ENCODE measurements at regions of chr12 and their contacts with region 1.

Region 1: DNA sequence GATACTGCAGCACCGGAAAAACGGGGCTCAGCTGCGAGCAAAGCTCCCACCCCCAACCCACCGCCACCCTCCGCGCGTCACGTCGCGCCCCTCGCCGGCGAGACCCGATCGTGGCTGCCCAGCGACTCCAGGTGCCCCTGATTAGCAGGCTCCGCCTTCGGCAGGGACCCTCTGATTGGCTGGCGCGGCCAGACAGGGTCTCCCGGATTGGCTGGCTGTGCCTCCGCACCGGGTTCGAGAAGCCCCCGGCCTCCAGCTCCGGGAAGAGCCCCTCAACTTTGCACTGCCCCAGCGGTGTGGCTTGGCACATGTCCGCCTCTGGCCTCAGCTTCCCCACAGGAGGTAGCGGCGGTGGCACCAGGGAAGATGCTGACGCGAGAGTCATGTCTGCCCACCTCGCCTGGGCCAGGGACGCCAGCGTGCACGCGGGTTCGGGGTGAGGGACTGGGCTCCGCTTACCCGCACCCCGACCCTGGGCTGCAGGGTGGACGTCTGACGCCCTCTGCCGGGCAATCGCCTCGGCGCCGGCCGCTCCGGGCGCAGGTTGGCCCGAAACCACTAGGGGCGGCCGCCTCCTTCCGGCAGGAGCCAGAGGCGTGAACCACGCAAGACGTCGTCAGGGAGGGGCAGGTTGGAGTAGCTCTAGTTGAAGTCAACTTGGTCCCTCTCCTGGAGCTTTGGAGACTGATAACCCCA is 498 bp upstream of the RHOF start:
- DNase-seq: no peak
- H3K4me3 ChIP-seq: peak overlapping the region; percentile 47
- H3K27me3 ChIP-seq: no peaks in the 10 kb centered on the region
- CTCF ChIP-seq: peak; percentile 100

Region 2: GRCh38 chr12:121697098-121697698 is 96.8 kb before region 1 on chr12:
- CTCF ChIA-PET with region 1: interaction called, 119 read pairs
- POLR2A ChIA-PET with region 1: no interaction called
- DNase-seq: no peak
- H3K4me3 ChIP-seq: no peak overlapping the region
- H3K27me3 ChIP-seq: no peaks in the 10 kb centered on the region
- CTCF ChIP-seq: peak; percentile 27; the same call in 1 of the 2 replicates

Region 3: DNA sequence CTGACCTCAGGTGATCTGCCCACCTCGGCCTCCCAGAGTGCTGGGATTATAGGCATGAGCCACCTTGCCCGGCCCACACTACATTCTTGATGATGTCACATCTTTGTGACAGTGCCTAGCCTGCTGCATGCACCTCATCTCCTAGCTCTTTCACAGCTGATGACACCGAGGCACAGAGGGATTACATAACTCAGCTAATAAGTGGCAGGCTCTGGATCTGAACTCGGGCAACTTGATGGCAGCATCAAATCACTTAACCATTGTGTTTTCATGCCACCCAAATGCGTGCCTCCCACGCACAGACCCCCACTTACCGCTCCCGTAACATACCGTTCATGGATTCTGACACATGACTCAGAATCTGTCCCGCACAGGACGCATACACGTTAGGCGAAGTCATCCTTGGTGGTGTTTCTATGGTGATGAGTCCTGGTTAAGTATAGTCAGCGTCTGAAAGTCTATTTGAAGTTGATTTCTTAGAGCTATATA is 74.0 kb before region 1 on chr12:
- CTCF ChIA-PET with region 1: interaction called, 24 read pairs
- POLR2A ChIA-PET with region 1: no interaction called
- DNase-seq: peak; percentile 82
- H3K4me3 ChIP-seq: no peak overlapping the region
- H3K27me3 ChIP-seq: no peaks in the 10 kb centered on the region
- CTCF ChIP-seq: no peak

Region 4: GRCh38 chr12:121773011-121773777 is 20.8 kb before region 1 on chr12:
- CTCF ChIA-PET with region 1: interaction called, 322 read pairs
- POLR2A ChIA-PET with region 1: no interaction called
- DNase-seq: no peak
- H3K4me3 ChIP-seq: no peak overlapping the region
- H3K27me3 ChIP-seq: no peaks in the 10 kb centered on the region
- CTCF ChIP-seq: peak; percentile 90

Region 5: DNA sequence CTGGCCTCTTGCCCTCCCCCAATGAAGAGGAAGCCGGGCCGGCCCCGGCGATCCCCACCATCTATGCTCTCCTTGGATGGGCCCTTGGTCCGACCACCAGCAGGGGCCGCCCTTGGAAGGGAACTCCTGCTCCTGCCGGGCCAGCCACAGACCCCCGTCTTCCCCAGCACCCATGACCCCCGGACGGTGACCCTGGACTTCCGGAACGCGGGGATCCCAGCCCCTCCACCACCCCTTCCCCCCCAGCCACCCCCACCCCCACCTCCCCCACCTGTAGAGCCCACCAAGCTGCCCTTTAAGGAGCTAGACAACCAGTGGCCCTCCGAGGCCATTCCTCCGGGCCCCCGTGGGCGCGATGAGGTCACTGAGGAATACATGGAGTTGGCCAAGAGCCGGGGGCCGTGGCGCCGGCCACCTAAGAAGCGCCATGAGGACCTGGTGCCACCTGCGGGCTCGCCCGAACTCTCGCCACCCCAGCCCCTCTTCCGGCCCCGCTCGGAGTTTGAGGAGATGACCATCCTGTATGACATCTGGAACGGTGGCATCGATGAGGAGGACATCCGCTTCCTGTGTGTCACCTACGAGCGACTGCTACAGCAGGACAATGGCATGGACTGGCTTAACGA is 29.2 kb after region 1 on chr12:
- CTCF ChIA-PET with region 1: interaction called, 23 read pairs
- POLR2A ChIA-PET with region 1: no interaction called
- DNase-seq: no peak
- H3K4me3 ChIP-seq: no peak overlapping the region
- H3K27me3 ChIP-seq: no peaks in the 10 kb centered on the region
- CTCF ChIP-seq: no peak

Region 6: DNA sequence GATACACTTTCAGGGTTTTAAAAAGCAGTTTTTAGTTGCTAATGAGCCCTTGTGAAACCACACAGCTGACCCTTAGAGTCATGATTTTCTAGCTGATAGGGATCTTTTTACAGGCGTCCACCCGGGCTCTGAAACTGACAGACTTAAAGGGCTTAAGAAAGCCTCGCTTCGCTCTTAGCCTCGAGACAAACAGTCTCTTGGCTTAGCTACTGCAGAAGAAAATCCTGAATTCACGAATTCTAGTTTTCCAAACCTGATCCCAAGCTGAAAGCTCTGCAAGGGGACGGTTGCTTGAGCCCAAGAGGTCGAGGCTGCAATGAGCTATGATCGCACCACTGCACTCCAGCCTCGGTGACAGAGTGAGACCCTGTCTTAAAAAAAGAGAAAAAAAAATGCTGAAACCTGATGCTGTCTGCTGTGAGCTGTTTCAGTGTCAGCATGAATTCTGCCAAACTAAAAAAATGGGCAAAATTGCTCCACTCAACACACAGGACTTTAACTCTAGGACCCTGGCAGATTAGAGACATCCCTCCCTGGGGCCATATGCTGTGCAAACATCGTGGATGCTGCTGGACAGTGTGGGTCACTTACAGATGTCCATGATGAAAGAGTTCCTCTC is 67.8 kb after region 1 on chr12:
- CTCF ChIA-PET with region 1: interaction called, 15 read pairs
- POLR2A ChIA-PET with region 1: no interaction called
- DNase-seq: no peak
- H3K4me3 ChIP-seq: no peak overlapping the region
- H3K27me3 ChIP-seq: no peaks in the 10 kb centered on the region
- CTCF ChIP-seq: no peak

Region 7: DNA sequence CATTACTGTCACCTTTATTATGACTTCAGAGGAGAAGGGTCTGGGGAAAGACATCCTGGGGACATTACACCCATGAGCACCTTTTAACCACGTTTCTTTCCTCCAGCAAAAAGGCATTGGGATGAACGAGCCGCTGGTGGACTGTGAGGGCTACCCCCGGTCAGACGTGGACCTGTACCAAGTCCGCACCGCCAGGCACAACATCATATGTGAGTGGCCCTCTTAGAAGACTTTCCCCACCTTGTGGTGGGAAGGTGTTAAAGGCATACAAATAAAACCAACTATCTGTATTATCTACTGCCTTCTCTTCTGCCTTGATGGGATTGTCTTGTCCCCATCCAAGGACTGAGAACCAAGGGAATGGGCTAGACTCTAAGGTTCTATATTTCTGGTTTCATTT is 100.6 kb after region 1 on chr12:
- CTCF ChIA-PET with region 1: interaction called, 64 read pairs
- POLR2A ChIA-PET with region 1: interaction called, 6 read pairs
- DNase-seq: no peak
- H3K4me3 ChIP-seq: no peak overlapping the region
- H3K27me3 ChIP-seq: no peaks in the 10 kb centered on the region
- CTCF ChIP-seq: peak; percentile 40

Measured in BJ (cell line).